GM23248 (cell line): ENCODE measurements at regions of chr1 and their contacts with region 1.

Region 1: GRCh38 chr1:199684686-199685273 is 342.7 kb upstream of the NR5A2 start:
- DNase-seq: peak; percentile 84
- H3K4me3 ChIP-seq: no peak overlapping the region
- H3K27ac ChIP-seq: peak overlapping the region; percentile 43
- H3K4me1 ChIP-seq: peaks cover 37% of the 10 kb centered on the region
- H3K27me3 ChIP-seq: no peaks in the 10 kb centered on the region

Region 2: GRCh38 chr1:199279872-199280645 is 404.7 kb before region 1 on chr1:
- in situ Hi-C with region 1: no loop called
- DNase-seq: peak; percentile 86
- H3K4me3 ChIP-seq: no peak overlapping the region
- H3K27ac ChIP-seq: peak overlapping the region; percentile 0; the same call in 1 of the 2 replicates
- H3K4me1 ChIP-seq: peaks cover 22% of the 10 kb centered on the region
- H3K27me3 ChIP-seq: no peaks in the 10 kb centered on the region

Region 3: DNA sequence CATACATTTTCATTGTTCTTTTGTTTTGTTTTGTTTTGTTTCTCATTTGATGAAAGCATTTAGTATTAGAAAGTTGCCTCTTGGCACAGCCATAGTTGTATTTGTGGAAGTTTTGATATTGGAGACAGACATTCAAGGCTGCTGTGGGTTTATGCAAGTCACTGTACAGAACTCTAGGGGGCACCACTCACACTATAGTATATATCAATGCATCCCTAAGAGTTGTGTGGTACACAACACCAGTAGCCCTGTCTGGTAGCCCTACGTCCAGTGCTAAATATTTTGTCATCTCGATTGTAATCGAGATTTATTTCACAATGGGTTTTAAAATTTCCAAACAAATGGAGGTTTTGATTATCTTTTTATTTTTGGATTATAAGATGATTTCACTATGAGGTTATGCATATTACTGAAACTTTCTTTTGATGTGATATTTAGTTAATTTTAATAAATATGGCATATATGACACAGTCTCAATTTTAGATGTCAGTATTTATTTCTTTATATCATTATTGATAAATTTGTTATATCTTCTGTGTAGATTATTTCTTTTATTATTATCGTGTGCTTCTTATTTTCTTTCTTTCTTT is 455.0 kb after region 1 on chr1:
- in situ Hi-C with region 1: loop called (anchors 25 kb)
- DNase-seq: peak; percentile 81
- H3K4me3 ChIP-seq: no peak overlapping the region
- H3K27ac ChIP-seq: no peak overlapping the region
- H3K4me1 ChIP-seq: no peaks in the 10 kb centered on the region
- H3K27me3 ChIP-seq: no peaks in the 10 kb centered on the region

Region 4: DNA sequence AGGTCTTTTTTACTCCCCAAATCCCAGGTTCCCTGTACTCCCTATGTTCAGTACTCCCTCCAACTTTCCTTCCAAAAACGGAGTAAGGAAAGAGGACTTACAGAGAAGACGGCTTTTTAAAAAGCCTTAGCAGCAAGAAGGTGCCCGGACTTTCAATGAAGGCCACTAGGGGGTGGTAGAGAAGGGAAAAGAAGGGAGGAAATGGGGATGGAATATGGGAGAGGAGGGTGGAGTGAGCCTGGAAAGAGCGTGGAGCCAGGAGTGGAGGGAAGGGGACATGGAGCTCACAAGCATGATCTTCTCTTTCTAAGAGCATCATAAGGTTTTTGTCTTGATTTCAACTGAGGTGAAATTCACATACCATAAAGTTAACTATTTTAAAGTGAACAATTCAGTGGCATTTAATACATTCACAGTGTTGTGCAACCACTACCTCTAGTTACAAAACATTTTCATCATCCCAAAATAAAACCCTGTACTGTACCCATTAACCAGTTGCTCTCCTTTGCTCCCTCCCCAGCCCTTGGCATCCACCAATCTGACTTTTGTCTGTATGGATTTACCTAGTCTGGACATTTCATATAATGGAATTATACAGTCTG is 595.1 kb after region 1 on chr1:
- in situ Hi-C with region 1: loop called (anchors 25 kb)
- DNase-seq: peak; percentile 61
- H3K4me3 ChIP-seq: no peak overlapping the region
- H3K27ac ChIP-seq: no peak overlapping the region
- H3K4me1 ChIP-seq: no peaks in the 10 kb centered on the region
- H3K27me3 ChIP-seq: no peaks in the 10 kb centered on the region

Region 5: DNA sequence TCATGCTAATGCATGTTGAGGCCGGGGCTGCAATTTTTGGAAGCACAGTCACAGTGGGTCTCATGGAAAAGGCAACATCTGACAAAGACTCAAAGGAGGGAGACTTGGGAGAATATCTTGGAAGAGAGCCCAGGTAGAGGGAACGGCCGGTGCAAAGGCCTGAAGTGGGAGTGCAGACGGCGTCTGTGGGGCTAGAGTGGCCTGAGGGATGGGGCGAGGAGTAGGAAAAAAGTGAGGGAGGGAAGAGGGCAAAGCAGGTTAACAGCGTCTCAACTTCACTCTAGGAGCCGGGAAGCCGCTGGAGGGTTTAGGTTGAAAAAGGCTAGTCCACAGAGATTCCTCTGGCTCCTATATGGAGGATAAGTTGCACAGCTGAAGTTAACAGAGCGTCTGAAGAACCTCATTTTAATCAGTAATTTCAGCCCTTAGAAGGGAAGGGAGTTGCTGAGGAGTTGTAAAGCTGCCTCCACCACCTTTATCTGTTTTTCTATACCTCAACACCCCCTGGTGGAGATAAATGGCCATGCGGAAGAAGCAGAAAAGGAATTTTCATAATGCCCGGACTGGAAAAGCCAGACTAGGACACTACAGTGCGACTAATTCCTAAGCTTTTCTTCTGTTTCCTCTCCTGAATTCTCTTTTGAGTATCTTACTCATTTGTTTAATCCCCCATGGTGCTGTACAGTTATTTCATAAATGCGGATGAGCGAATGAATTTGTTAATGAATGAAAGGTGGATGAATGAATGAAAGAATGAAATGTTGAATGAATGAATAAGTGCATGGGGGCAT is 803.8 kb after region 1 on chr1:
- in situ Hi-C with region 1: loop called (anchors 10 kb)
- DNase-seq: peak; percentile 89
- H3K4me3 ChIP-seq: no peak overlapping the region
- H3K27ac ChIP-seq: no peak overlapping the region
- H3K4me1 ChIP-seq: peaks cover 13% of the 10 kb centered on the region
- H3K27me3 ChIP-seq: no peaks in the 10 kb centered on the region